ENCODE measurements at regions of chr18 and their contacts with region 1.

Region 1: DNA sequence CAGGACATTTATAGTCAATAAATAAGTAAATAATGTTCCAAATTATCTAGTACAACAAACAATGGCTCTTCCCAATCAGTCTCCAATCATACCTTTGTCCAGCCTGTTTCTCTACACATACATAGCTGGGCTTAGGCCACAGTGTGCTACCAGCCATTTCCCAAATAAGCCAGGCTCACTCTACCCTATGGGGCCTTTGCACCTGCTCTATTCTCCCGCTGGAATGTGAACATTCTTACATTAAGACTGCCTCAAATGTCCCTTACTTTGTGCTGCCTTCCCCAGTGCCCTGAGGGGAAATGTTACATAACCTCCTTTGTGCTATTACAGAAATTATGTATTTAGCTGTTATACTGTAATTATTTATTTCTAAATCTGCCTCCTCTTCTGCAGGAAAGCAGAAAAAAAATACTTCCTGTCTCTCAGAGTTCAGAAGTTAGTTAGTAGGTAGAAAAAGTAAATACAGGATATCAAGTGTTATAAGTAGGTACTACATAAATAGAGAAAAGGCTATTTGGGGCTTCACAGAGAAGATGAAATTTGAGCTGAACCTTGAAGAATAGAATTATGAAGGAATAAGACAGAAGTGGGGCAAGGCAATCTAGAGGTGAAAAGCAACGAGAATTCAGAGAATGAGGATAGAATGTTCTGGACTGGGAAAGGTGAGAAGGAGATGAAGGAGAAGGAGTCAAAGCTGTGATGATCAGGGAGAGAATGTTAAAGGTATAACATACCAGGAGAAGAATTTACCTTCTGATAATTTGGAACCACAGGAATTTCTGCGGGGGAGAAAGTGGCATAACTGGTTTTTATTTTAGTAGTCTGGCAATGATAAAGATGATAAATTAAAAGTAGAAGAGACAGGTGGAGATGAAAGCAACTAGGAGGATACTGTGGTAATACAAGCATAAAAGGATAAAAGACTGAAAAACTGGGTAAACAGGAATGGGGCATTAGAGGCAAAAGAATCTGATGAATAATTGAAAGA is 37.0 kb downstream of the ROCK1 start:
- DNase-seq: no peak
- ATAC-seq: peak in 1 of 4 donors; percentile 18
- H3K4me3 ChIP-seq: no peak overlapping the region
- H3K27ac ChIP-seq: no peak overlapping the region
- H3K4me1 ChIP-seq: peaks cover 0 to 70% (median 37%) of the 10 kb centered on the region in 12 donors
- H3K27me3 ChIP-seq: no peaks in the 10 kb centered on the region
- CTCF ChIP-seq: no peak
- POLR2A ChIP-seq: no peak

Region 2: DNA sequence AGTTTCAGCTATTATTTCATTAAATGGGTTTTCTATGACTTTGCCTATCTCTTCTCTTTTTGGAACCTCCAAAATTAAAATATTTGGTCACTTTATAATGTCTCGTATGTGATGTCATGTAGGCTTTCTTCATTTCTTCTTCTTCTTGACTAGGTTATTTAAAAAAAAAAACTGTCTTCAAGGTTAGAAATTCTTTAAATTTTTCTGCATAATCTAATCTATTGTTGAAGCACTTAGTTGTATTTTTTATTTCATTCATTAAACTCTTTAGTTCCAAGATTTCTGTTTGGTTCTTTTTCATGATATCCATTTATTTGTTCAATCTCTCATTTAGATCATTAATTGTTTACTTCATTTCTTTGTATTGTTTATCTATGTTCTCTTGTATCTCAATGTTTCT is 80.8 kb after region 1 on chr18:
- intact Hi-C with region 1: loop called in 1 of 10 experiments (anchors 10 kb)
- DNase-seq: no peak
- ATAC-seq: no peak
- H3K4me3 ChIP-seq: no peak overlapping the region
- H3K27ac ChIP-seq: no peak overlapping the region
- H3K4me1 ChIP-seq: no peaks in the 10 kb centered on the region
- H3K27me3 ChIP-seq: no peaks in the 10 kb centered on the region
- CTCF ChIP-seq: no peak
- POLR2A ChIP-seq: no peak